ENCODE measurements at regions of chr7 and their contacts with region 1.

Region 1: GRCh38 chr7:101688183-101688831 is 59.2 kb upstream of the MYL10 start:
- DNase-seq: peak; percentile 79 to 88
- ATAC-seq: peak; percentile 88 to 93 (median 91)
- H3K4me3 ChIP-seq: peak overlapping the region in 9 of 10 donors; percentile 4 to 35 (median 24)
- H3K27ac ChIP-seq: peak overlapping the region in 2 of 10 donors; percentile 10 to 32
- H3K4me1 ChIP-seq: peaks cover 0 to 14% (median 11%) of the 10 kb centered on the region in 9 donors
- H3K27me3 ChIP-seq: no peaks in the 10 kb centered on the region
- CTCF ChIP-seq: peak; percentile 92 to 98 (median 97)

Region 2: DNA sequence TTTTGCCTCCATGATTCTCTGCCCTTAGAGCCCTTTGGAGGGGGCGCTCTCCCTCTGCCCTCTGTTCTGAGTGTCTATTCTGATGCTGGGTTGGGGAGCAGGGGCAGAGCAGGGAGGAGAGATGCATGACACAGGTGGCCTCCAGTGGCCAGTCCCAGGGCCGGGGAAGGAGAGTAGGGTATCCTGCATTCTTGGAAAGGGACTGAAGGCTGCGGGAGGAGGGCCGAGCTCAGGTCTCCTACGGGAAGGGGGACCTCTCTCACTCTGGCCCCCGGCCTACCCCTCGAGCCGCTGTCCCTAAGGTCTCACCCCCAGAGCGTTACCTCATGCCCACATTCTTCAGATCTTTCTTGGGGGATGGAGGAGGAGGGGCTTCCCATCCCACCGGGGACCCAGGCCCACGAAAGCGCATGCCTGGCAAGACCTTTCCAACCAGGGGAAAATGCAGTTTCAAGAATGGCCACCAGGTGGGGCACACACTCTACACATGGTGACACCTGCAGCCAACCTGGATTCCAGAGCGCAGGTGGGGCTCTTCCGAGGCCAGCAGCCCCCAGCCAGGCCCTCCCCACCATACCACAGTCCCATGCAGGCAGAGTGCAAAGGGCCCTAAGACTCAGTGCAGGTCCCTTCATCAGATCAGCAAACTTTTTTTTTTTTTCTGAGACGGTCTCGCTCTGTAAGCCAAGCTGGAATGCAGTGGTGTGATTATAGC is 145.6 kb before region 1 on chr7:
- intact Hi-C with region 1: loop called in 1 of 10 experiments (anchors 5 kb)
- DNase-seq: peak; percentile 47 to 55
- ATAC-seq: peak; percentile 9 to 61 (median 32)
- H3K4me3 ChIP-seq: no peak overlapping the region
- H3K27ac ChIP-seq: no peak overlapping the region
- H3K4me1 ChIP-seq: peaks cover 0 to 11% (median 0%) of the 10 kb centered on the region in 9 donors
- H3K27me3 ChIP-seq: peaks cover 0 to 9% (median 0%) of the 10 kb centered on the region in 7 donors
- CTCF ChIP-seq: peak; percentile 83 to 94 (median 88)

Region 3: GRCh38 chr7:101729241-101729993 is 41.1 kb after region 1 on chr7:
- intact Hi-C with region 1: no loop called
- DNase-seq: no peak
- ATAC-seq: peak in 1 of 8 donors; percentile 26
- H3K4me3 ChIP-seq: no peak overlapping the region
- H3K27ac ChIP-seq: peak overlapping the region in 1 of 10 donors; percentile 3
- H3K4me1 ChIP-seq: peaks cover 0 to 22% (median 10%) of the 10 kb centered on the region in 9 donors
- H3K27me3 ChIP-seq: peaks cover 0 to 14% (median 0%) of the 10 kb centered on the region in 7 donors
- CTCF ChIP-seq: no peak

Region 4: GRCh38 chr7:101804967-101805366 is 116.7 kb after region 1 on chr7:
- intact Hi-C with region 1: loop called in 5 of 10 experiments (anchors 2 to 10 kb)
- DNase-seq: no peak
- ATAC-seq: no peak
- H3K4me3 ChIP-seq: no peak overlapping the region
- H3K27ac ChIP-seq: no peak overlapping the region
- H3K4me1 ChIP-seq: peaks cover 0 to 12% (median 4%) of the 10 kb centered on the region in 9 donors
- H3K27me3 ChIP-seq: peaks cover 0 to 61% (median 32%) of the 10 kb centered on the region in 7 donors
- CTCF ChIP-seq: no peak

Region 5: DNA sequence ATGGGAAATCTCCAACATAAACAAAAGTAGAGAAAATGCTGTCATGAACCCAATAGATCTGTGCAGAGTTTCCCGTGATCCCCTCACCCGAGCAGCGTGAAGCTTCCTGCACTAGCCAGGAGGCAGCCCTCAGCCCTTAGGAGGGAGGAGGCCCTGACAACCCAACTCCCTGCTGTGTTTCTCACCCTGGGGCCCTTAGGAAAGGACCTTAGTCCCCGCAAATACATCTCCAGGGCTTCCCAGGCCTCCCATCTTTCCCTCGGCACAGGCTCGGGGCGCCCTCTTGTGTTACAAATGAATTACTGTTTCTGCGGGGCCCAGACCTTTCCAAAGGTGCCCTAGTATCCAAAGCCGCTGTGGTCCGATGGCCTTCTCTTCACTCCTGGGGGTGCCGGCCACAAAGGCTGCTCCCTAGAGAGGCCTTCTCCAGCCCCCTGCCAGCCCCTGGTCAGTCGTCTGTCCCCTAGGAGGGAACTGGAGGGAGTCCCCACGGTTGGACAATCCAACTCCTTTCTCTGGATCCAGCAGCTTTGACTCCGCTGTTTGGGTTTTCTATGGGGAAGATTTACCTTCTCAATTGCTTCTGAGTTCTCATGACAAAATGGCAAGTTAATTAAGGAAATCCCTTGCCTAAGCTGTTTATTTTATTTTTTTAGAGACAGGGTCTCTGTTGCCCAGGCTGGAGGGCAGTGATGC is 548.4 kb after region 1 on chr7:
- intact Hi-C with region 1: loop called (anchors 2 to 10 kb)
- DNase-seq: peak; percentile 47 to 54
- ATAC-seq: peak; percentile 59 to 85 (median 80)
- H3K4me3 ChIP-seq: no peak overlapping the region
- H3K27ac ChIP-seq: no peak overlapping the region
- H3K4me1 ChIP-seq: peaks cover 0 to 21% (median 6%) of the 10 kb centered on the region in 9 donors
- H3K27me3 ChIP-seq: no peaks in the 10 kb centered on the region
- CTCF ChIP-seq: peak; percentile 59 to 87 (median 81)

Region 6: DNA sequence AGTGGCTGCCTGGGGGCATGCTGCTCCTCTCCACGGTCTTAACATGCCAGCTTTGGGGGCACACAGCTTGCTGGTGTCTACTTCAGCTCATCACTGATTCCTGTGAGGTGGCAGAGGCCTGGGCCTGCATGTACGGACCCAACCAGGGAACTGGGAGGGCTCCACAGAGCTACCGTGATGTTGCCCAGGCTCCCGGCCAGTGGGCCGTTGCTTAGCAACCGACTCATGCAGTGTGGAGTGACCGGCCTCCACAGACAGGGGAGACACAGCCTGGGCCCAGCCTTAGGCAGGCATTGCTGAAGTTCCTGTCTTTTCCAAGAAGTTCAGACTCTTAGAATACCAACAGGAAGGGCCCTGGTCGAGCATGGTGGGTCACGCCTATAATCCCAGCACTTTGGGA is 572.5 kb after region 1 on chr7:
- intact Hi-C with region 1: loop called in 1 of 10 experiments (anchors 10 kb)
- DNase-seq: peak; percentile 48 to 56
- ATAC-seq: peak; percentile 68 to 96 (median 86)
- H3K4me3 ChIP-seq: no peak overlapping the region
- H3K27ac ChIP-seq: no peak overlapping the region
- H3K4me1 ChIP-seq: peaks cover 0 to 5% (median 0%) of the 10 kb centered on the region in 9 donors
- H3K27me3 ChIP-seq: no peaks in the 10 kb centered on the region
- CTCF ChIP-seq: no peak

Region 7: GRCh38 chr7:102272075-102272917 is 584.0 kb after region 1 on chr7:
- intact Hi-C with region 1: loop called in 4 of 10 experiments (anchors 5 to 10 kb)
- DNase-seq: peak; percentile 66 to 82
- ATAC-seq: peak; percentile 87 to 90 (median 89)
- H3K4me3 ChIP-seq: no peak overlapping the region
- H3K27ac ChIP-seq: no peak overlapping the region
- H3K4me1 ChIP-seq: peaks cover 0 to 7% (median 0%) of the 10 kb centered on the region in 9 donors
- H3K27me3 ChIP-seq: no peaks in the 10 kb centered on the region
- CTCF ChIP-seq: peak; percentile 76 to 95 (median 89)

Region 8: GRCh38 chr7:102279537-102280400 is 591.5 kb after region 1 on chr7:
- intact Hi-C with region 1: loop called in 3 of 10 experiments (anchors 5 to 10 kb)
- DNase-seq: peak; percentile 36 to 48
- ATAC-seq: peak; percentile 65 to 90 (median 82)
- H3K4me3 ChIP-seq: no peak overlapping the region
- H3K27ac ChIP-seq: no peak overlapping the region
- H3K4me1 ChIP-seq: peaks cover 0 to 12% (median 1%) of the 10 kb centered on the region in 9 donors
- H3K27me3 ChIP-seq: no peaks in the 10 kb centered on the region
- CTCF ChIP-seq: peak; percentile 57 to 91 (median 88)

Measured in heart right ventricle (tissue), 16 donors.